ENCODE measurements at regions of chr12 and their contacts with region 1.

Region 1: GRCh38 chr12:88371416-88372183 is 208.7 kb downstream of the KITLG start:
- DNase-seq: no peak
- H3K4me3 Mint-ChIP-seq: no peak overlapping the region
- H3K27ac Mint-ChIP-seq: no peak overlapping the region
- H3K4me1 Mint-ChIP-seq: no peaks in the 10 kb centered on the region
- H3K27me3 Mint-ChIP-seq: no peaks in the 10 kb centered on the region
- CTCF ChIP-seq: no peak

Region 2: GRCh38 chr12:88342251-88342806 is 29.3 kb before region 1 on chr12:
- CTCF ChIA-PET with region 1: no interaction called
- intact Hi-C with region 1: loop called (anchors 1 kb)
- DNase-seq: no peak
- H3K4me3 Mint-ChIP-seq: no peak overlapping the region
- H3K27ac Mint-ChIP-seq: no peak overlapping the region
- H3K4me1 Mint-ChIP-seq: no peaks in the 10 kb centered on the region
- H3K27me3 Mint-ChIP-seq: no peaks in the 10 kb centered on the region
- CTCF ChIP-seq: no peak

Region 3: DNA sequence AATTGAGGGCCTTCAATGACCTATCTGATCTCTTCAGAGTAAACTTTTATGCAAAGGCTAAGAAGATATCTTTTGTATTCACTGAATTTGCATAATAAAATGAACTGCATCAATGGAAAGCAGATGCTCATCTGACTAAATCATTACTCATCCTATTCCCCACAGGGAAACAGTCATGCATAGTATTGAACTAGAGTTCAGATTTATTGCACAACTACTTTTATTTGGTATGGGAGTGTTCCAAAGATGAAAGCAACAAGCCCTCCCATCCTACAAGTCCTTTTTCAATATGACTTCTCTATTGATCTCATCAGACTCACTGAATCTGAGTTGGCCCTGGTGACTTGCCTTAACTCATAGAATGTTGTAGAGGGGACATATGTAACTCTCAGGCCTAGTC is 48.9 kb after region 1 on chr12:
- CTCF ChIA-PET with region 1: no interaction called
- intact Hi-C with region 1: no loop called
- DNase-seq: no peak
- H3K4me3 Mint-ChIP-seq: no peak overlapping the region
- H3K27ac Mint-ChIP-seq: no peak overlapping the region
- H3K4me1 Mint-ChIP-seq: no peaks in the 10 kb centered on the region
- H3K27me3 Mint-ChIP-seq: no peaks in the 10 kb centered on the region
- CTCF ChIP-seq: no peak

Measured in Calu3 (cell line).